Aorta (tissue), 5 donors: ENCODE measurements at regions of chr9 and their contacts with region 1.

Region 1: GRCh38 chr9:129932303-129933151 is 97.3 kb downstream of the USP20 start:
- DNase-seq: no peak
- ATAC-seq: no peak
- H3K4me3 ChIP-seq: no peak overlapping the region
- H3K27ac ChIP-seq: peak overlapping the region in 1 of 2 donors; percentile 76
- H3K4me1 ChIP-seq: peaks cover 7 to 8% of the 10 kb centered on the region in 2 donors
- H3K27me3 ChIP-seq: no peaks in the 10 kb centered on the region

Region 2: DNA sequence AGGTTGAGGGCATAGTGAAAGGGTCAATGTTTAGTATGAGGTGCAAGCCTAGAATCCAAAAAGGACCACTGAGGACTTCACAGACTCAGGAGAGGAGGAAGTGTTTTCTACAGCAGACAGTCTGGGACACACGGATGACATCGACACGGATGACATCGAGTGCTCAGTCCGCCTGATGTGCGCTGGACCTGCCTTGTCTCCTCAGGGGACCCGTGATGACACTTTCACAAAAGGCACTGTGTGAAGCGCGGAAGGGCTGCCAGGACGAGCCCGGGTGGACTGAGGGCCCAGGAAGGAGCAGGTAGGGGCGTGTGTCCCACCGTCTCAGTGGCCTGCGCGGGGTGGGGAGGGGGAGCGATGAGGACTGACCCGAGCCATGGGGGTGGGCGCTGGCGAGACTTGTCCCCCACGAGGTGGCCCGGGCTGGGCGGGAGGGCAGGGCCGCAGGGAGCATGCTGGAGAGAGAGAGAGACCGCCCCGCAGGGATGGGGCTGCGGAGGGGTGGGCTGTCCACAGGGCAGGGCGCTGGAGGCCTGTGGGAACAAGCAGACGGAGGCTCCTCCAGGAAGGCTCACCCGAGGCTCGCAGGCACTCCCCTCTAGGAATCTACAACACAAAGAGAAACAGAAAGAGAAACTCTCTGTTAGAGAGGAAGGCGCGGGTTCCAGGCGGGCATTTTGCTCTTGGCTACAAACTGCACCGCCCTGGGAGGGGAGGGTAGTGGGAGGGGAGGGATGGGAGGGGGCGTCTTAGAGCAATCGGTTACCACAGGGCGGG is 42.4 kb before region 1 on chr9:
- intact Hi-C with region 1: loop called in 1 of 2 experiments (anchors 5 kb)
- DNase-seq: peak in 1 of 2 donors; percentile 74
- ATAC-seq: no peak
- H3K4me3 ChIP-seq: no peak overlapping the region
- H3K27ac ChIP-seq: no peak overlapping the region
- H3K4me1 ChIP-seq: no peaks in the 10 kb centered on the region
- H3K27me3 ChIP-seq: no peaks in the 10 kb centered on the region

Region 3: GRCh38 chr9:130128733-130129431 is 196.4 kb after region 1 on chr9:
- intact Hi-C with region 1: no loop called
- DNase-seq: peak in 1 of 2 donors; percentile 85
- ATAC-seq: peak; percentile 35
- H3K4me3 ChIP-seq: no peak overlapping the region
- H3K27ac ChIP-seq: no peak overlapping the region
- H3K4me1 ChIP-seq: no peaks in the 10 kb centered on the region
- H3K27me3 ChIP-seq: no peaks in the 10 kb centered on the region